HAP-1 (cell line): ENCODE measurements at regions of chrX and their contacts with region 1.

Region 1: GRCh38 chrX:114626323-114626722 is 42.4 kb downstream of the HTR2C start:
- DNase-seq: peak; percentile 34 to 41
- H3K4me3 ChIP-seq: no peak overlapping the region
- H3K4me1 ChIP-seq: no peaks in the 10 kb centered on the region
- H3K27me3 ChIP-seq: no peaks in the 10 kb centered on the region

Region 2: GRCh38 chrX:114959729-114960128 is 333.4 kb after region 1 on chrX:
- in situ Hi-C with region 1: loop called (anchors 25 kb)
- DNase-seq: peak in 1 of 2 experiments; percentile 63
- H3K4me3 ChIP-seq: no peak overlapping the region
- H3K4me1 ChIP-seq: no peaks in the 10 kb centered on the region
- H3K27me3 ChIP-seq: no peaks in the 10 kb centered on the region